ENCODE measurements at regions of chr19 and their contacts with region 1.

Region 1: DNA sequence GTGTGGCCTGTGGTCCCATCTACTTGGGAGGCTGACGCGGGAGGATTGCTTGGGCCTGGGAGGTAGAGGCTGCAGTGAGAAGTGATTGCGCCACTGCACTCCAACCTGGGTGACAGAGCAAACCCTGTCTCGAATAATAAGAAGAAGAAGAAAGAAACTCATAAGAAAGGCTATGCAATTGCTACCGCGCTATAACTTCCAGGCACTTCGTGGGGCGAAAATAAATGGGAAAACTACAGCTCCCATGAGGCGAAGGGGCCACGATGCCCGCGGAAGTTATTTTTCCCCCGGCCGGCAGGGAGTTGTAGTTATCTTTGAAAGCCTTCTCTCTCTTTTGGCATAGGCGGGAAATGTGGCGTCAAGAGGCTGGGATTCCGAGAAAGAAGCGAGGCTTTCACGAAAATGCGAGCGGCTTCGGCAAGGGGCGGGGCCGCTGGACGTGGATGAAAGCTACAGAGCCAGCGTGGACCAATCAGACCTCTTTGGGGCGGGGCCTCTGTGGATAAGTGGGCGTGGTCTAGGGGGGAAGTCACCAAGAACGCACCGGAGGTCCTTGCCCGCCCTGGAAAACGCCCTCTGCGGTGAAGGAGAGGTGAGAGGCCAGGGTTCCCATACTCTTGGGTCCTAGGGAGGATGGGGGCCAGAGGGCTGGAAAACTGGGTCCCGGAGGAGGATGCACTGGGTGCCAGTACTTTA is at the start of gene NUCB1:
- DNase-seq: peak; percentile 100
- H3K4me3 Mint-ChIP-seq: peak within 1 kb of the TSS; percentile 98
- H3K27ac Mint-ChIP-seq: peak within 1 kb of the TSS; percentile 95
- H3K4me1 Mint-ChIP-seq: peaks cover 26% of the 10 kb centered on the region
- H3K27me3 Mint-ChIP-seq: peaks cover 4% of the 10 kb centered on the region
- total RNA-seq, gene NUCB1: 116 and 117 TPM in 2 replicates

Region 2: GRCh38 chr19:48842789-48843162 is 57.2 kb before region 1 on chr19:
- intact Hi-C with region 1: no loop called
- DNase-seq: peak; percentile 88
- H3K4me3 Mint-ChIP-seq: no peak overlapping the region
- H3K27ac Mint-ChIP-seq: no peak overlapping the region
- H3K4me1 Mint-ChIP-seq: peaks cover under 1% of the 10 kb centered on the region
- H3K27me3 Mint-ChIP-seq: peaks cover 3% of the 10 kb centered on the region

Region 3: GRCh38 chr19:48858984-48859710 is 40.8 kb before region 1 on chr19:
- intact Hi-C with region 1: loop called (anchors 1 kb)
- DNase-seq: peak; percentile 93
- H3K4me3 Mint-ChIP-seq: peak overlapping the region; percentile 89
- H3K27ac Mint-ChIP-seq: peak overlapping the region; percentile 84
- H3K4me1 Mint-ChIP-seq: peaks cover 5% of the 10 kb centered on the region
- H3K27me3 Mint-ChIP-seq: no peaks in the 10 kb centered on the region

Region 4: DNA sequence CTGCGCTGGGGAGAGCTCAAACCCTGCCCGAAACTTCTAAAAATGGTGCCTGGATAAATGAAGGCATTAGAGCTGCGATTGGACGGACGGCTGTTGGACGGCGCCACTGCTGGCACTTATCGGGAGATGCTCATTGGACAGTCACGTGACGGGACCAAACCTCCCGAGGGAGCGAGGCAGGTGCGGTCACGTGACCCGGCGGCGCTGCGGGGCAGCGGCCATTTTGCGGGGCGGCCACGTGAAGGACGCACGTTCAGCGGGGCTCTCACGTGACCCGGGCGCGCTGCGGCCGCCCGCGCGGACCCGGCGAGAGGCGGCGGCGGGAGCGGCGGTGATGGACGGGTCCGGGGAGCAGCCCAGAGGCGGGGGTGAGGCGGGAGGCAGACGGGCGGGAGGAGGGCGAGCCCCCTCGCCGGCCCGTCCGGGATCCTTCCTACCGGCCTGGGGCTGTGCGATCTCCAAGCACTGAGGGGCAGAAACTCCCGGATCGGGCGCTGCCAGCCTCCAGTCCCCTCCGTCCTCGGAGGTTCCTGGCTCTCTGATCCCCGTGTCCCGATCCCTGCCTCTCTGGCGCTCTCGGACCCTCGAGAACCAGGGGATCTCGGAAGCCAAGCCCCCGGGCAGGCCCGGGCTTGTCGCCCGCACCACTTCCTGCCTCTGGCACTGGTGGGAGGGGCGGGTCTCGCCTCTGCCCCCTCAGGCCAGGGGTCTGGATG is 54.8 kb after region 1 on chr19 and contains the start of gene BAX:
- intact Hi-C with region 1: loop called (anchors 2 kb)
- DNase-seq: peak; percentile 98
- H3K4me3 Mint-ChIP-seq: peak within 1 kb of the TSS; percentile 86
- H3K27ac Mint-ChIP-seq: peak within 1 kb of the TSS; percentile 93
- H3K4me1 Mint-ChIP-seq: peaks cover 25% of the 10 kb centered on the region
- H3K27me3 Mint-ChIP-seq: no peaks in the 10 kb centered on the region
- total RNA-seq, gene BAX: 257 and 298 TPM in 2 replicates

Measured in activated CD4-positive, alpha-beta T cell treated with anti-CD3 and anti-CD28 coated beads, Interleukin-2, amount 10 ng/mL, durations not matched to agents 24 days and 14 days (primary cell).